ENCODE measurements at regions of chr1 and their contacts with region 1.

Region 1: DNA sequence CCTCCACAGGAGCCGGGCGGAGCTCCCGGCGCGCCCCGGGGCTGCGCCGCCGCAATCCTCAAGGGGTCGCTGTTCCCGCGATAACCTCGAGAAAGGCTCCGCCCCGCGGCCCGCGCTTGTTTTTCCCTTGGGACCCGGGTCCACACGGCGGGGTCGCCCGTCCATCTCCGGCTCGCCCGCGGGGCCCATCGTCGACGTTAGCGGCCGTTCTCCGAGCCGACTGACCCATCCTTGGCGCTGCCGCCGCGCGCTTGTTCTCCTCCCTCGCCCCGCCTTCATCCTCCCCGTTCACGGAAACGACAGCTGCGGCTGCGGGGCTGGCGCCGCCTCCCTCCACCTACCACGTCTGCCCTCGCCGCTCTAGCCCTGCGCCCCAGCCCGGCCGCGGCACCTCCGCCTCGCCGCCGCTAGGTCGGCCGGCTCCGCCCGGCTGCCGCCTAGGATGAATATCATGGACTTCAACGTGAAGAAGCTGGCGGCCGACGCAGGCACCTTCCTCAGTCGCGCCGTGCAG is at the start of gene SH3GLB1:
- DNase-seq: peak; percentile 88 to 94
- ATAC-seq: peak; percentile 79 to 95 (median 86)
- H3K4me3 ChIP-seq: peak within 1 kb of the TSS; percentile 77
- H3K4me3 Mint-ChIP-seq: peak within 1 kb of the TSS; percentile 98
- H3K27ac ChIP-seq: peak within 1 kb of the TSS; percentile 92
- H3K27ac Mint-ChIP-seq: peak within 1 kb of the TSS; percentile 96 to 99
- H3K4me1 ChIP-seq: peaks cover 3% of the 10 kb centered on the region
- H3K4me1 Mint-ChIP-seq: peaks cover 59 to 66% of the 10 kb centered on the region in 2 donors
- H3K27me3 ChIP-seq: no peaks in the 10 kb centered on the region
- H3K27me3 Mint-ChIP-seq: no peaks in the 10 kb centered on the region
- CTCF ChIP-seq: peak; percentile 91
- total RNA-seq, gene SH3GLB1: 98.1 to 114 (median 109) TPM

Region 2: GRCh38 chr1:86345042-86345441 is 359.5 kb before region 1 on chr1:
- intact Hi-C with region 1: no loop called
- DNase-seq: no peak
- ATAC-seq: no peak
- H3K4me3 ChIP-seq: no peak overlapping the region
- H3K4me3 Mint-ChIP-seq: no peak overlapping the region
- H3K27ac ChIP-seq: no peak overlapping the region
- H3K27ac Mint-ChIP-seq: no peak overlapping the region
- H3K4me1 ChIP-seq: no peaks in the 10 kb centered on the region
- H3K4me1 Mint-ChIP-seq: no peaks in the 10 kb centered on the region
- H3K27me3 ChIP-seq: no peaks in the 10 kb centered on the region
- H3K27me3 Mint-ChIP-seq: peaks cover 0 to 3% of the 10 kb centered on the region in 2 donors
- CTCF ChIP-seq: no peak

Region 3: GRCh38 chr1:86395771-86396497 is 308.6 kb before region 1 on chr1 and contains the start of gene ODF2L:
- intact Hi-C with region 1: loop called (anchors 5 kb)
- DNase-seq: peak; percentile 85 to 89
- ATAC-seq: peak; percentile 99 to 100 (median 100)
- H3K4me3 ChIP-seq: peak within 1 kb of the TSS; percentile 86
- H3K4me3 Mint-ChIP-seq: peak within 1 kb of the TSS; percentile 94
- H3K27ac ChIP-seq: peak within 1 kb of the TSS; percentile 87
- H3K27ac Mint-ChIP-seq: peak within 1 kb of the TSS; percentile 90 to 96
- H3K4me1 ChIP-seq: peaks cover 15% of the 10 kb centered on the region
- H3K4me1 Mint-ChIP-seq: peaks cover 35 to 37% of the 10 kb centered on the region in 2 donors
- H3K27me3 ChIP-seq: no peaks in the 10 kb centered on the region
- H3K27me3 Mint-ChIP-seq: peaks cover 0 to 5% of the 10 kb centered on the region in 2 donors
- CTCF ChIP-seq: no peak
- total RNA-seq, gene ODF2L: 79.7 to 102 (median 82.0) TPM

Region 4: GRCh38 chr1:86499987-86500593 is 204.4 kb before region 1 on chr1:
- intact Hi-C with region 1: loop called (anchors 1 kb)
- DNase-seq: peak in 1 of 2 donors; percentile 57
- ATAC-seq: peak; percentile 81 to 89 (median 87)
- H3K4me3 ChIP-seq: no peak overlapping the region
- H3K4me3 Mint-ChIP-seq: no peak overlapping the region
- H3K27ac ChIP-seq: no peak overlapping the region
- H3K27ac Mint-ChIP-seq: no peak overlapping the region
- H3K4me1 ChIP-seq: peaks cover 18% of the 10 kb centered on the region
- H3K4me1 Mint-ChIP-seq: peaks cover 6 to 16% of the 10 kb centered on the region in 2 donors
- H3K27me3 ChIP-seq: no peaks in the 10 kb centered on the region
- H3K27me3 Mint-ChIP-seq: peaks cover 16 to 30% of the 10 kb centered on the region in 2 donors
- CTCF ChIP-seq: peak; percentile 100

Region 5: DNA sequence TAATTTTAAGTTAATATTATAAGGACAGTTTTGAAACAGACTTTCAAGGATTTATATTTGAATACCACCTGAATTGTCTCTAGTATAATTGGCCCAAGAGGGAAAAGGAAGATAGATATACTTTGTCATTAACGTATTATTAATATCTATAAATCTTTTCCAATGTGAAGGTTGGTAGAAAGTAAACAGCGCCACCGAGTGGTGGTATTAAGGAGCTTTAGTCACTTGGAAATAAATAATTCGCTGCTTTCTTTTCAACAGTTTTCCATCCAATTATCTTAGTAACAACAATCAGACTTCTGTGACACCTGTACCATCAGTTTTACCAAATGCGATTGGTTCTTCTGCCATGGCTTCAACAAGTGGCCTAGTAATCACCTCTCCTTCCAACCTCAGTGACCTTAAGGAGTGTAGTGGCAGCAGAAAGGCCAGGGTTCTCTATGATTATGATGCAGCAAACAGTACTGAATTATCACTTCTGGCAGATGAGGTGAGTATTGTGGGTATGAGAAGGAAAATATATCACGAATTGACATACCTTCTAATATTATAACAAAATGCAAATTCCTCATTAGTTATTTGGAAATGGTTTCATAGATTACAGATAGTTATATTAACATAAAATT is 37.5 kb after region 1 on chr1:
- intact Hi-C with region 1: loop called (anchors 1 kb)
- DNase-seq: peak in 1 of 2 donors; percentile 77
- ATAC-seq: no peak
- H3K4me3 ChIP-seq: no peak overlapping the region
- H3K4me3 Mint-ChIP-seq: no peak overlapping the region
- H3K27ac ChIP-seq: no peak overlapping the region
- H3K27ac Mint-ChIP-seq: no peak overlapping the region
- H3K4me1 ChIP-seq: peaks cover 5% of the 10 kb centered on the region
- H3K4me1 Mint-ChIP-seq: peaks cover 0 to 12% of the 10 kb centered on the region in 2 donors
- H3K27me3 ChIP-seq: no peaks in the 10 kb centered on the region
- H3K27me3 Mint-ChIP-seq: no peaks in the 10 kb centered on the region
- CTCF ChIP-seq: peak; percentile 80

Region 6: DNA sequence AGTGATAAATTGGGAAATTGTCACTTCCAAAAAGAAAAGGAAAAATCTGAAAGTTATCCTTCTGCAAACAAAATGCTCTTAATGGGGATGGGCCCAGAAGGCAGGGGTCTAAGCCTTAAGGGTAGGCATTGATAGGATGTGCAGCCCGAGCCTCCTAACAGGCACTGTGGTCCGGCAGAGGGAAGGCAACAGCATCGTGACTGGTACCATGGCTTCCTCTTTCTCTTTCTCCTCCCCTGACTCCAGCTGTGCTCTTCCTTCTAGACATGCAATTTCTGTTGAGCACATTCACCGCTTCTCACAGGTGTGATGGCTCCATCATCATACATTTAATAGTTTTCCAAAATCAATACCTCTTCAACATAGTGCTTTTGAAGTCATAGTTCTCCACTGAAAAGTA is 117.9 kb after region 1 on chr1:
- intact Hi-C with region 1: no loop called
- DNase-seq: no peak
- ATAC-seq: no peak
- H3K4me3 ChIP-seq: no peak overlapping the region
- H3K4me3 Mint-ChIP-seq: no peak overlapping the region
- H3K27ac ChIP-seq: no peak overlapping the region
- H3K27ac Mint-ChIP-seq: no peak overlapping the region
- H3K4me1 ChIP-seq: no peaks in the 10 kb centered on the region
- H3K4me1 Mint-ChIP-seq: peaks cover 0 to 5% of the 10 kb centered on the region in 2 donors
- H3K27me3 ChIP-seq: no peaks in the 10 kb centered on the region
- H3K27me3 Mint-ChIP-seq: peaks cover 11 to 15% of the 10 kb centered on the region in 2 donors
- CTCF ChIP-seq: no peak

Region 7: GRCh38 chr1:86913896-86914634 is 209.6 kb after region 1 on chr1 and contains the start of gene SELENOF:
- intact Hi-C with region 1: loop called (anchors 1 kb)
- DNase-seq: peak; percentile 98 to 100
- ATAC-seq: peak; percentile 87 to 96 (median 90)
- H3K4me3 ChIP-seq: peak within 1 kb of the TSS; percentile 84
- H3K4me3 Mint-ChIP-seq: no peak within 1 kb of the TSS
- H3K27ac ChIP-seq: peak within 1 kb of the TSS; percentile 94
- H3K27ac Mint-ChIP-seq: no peak within 1 kb of the TSS
- H3K4me1 ChIP-seq: peaks cover 9% of the 10 kb centered on the region
- H3K4me1 Mint-ChIP-seq: peaks cover 7 to 39% of the 10 kb centered on the region in 2 donors
- H3K27me3 ChIP-seq: no peaks in the 10 kb centered on the region
- H3K27me3 Mint-ChIP-seq: no peaks in the 10 kb centered on the region
- CTCF ChIP-seq: no peak
- total RNA-seq, gene SELENOF: 124 to 163 (median 137) TPM

Region 8: GRCh38 chr1:87335175-87335884 is 630.8 kb after region 1 on chr1:
- intact Hi-C with region 1: loop called (anchors 10 kb)
- DNase-seq: peak; percentile 69 to 72
- ATAC-seq: peak; percentile 57 to 78 (median 69)
- H3K4me3 ChIP-seq: peak overlapping the region; percentile 56
- H3K4me3 Mint-ChIP-seq: peak overlapping the region; percentile 95
- H3K27ac ChIP-seq: peak overlapping the region; percentile 71
- H3K27ac Mint-ChIP-seq: peak overlapping the region; percentile 88 to 98
- H3K4me1 ChIP-seq: peaks cover 25% of the 10 kb centered on the region
- H3K4me1 Mint-ChIP-seq: peaks cover 77% of the 10 kb centered on the region in 2 donors
- H3K27me3 ChIP-seq: no peaks in the 10 kb centered on the region
- H3K27me3 Mint-ChIP-seq: no peaks in the 10 kb centered on the region
- CTCF ChIP-seq: no peak

Region 9: GRCh38 chr1:88683541-88684481 is 1979.3 kb after region 1 on chr1 and contains the start of gene PKN2:
- intact Hi-C with region 1: loop called (anchors 10 kb)
- DNase-seq: peak; percentile 95 to 99
- ATAC-seq: peak; percentile 91 to 97 (median 93)
- H3K4me3 ChIP-seq: peak within 1 kb of the TSS; percentile 87
- H3K4me3 Mint-ChIP-seq: peak within 1 kb of the TSS; percentile 98
- H3K27ac ChIP-seq: peak within 1 kb of the TSS; percentile 93
- H3K27ac Mint-ChIP-seq: peak within 1 kb of the TSS; percentile 94 to 96
- H3K4me1 ChIP-seq: peaks cover 12% of the 10 kb centered on the region
- H3K4me1 Mint-ChIP-seq: peaks cover 21 to 35% of the 10 kb centered on the region in 2 donors
- H3K27me3 ChIP-seq: no peaks in the 10 kb centered on the region
- H3K27me3 Mint-ChIP-seq: no peaks in the 10 kb centered on the region
- CTCF ChIP-seq: no peak
- total RNA-seq, gene PKN2: 40.8 to 50.1 (median 47.2) TPM

Measured in natural killer cell (primary cell).